MCF 10A (cell line): ENCODE measurements at regions of chr14 and their contacts with region 1.

Region 1: DNA sequence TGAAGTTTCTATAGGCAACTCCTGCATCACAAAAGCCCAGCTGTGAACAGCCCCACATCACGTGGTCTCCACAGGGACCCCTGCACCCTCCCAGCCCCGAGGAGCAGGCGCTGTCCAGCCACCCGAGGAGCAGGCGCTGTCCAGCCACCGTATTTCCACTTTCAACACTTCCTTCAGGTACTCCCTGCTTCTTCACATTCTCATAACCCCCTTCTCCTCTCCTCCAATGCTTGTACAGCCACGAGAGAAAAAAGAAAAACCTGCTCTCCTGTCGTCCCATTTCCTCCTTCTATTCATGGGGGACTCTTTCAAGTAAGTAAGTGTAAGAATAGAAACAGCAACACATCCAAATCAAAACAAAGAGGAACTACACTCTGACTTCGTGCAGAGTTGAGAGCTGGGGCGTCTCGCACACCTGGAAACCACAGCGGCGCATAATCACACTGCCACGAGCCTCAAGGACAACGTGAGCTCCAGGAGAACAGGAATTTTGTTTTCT is 11.9 kb downstream of the CDC42BPB start:
- DNase-seq: no peak
- H3K4me3 Mint-ChIP-seq: no peak overlapping the region
- H3K27ac Mint-ChIP-seq: no peak overlapping the region
- H3K4me1 Mint-ChIP-seq: peaks cover 15% of the 10 kb centered on the region
- H3K27me3 Mint-ChIP-seq: no peaks in the 10 kb centered on the region
- CTCF ChIP-seq: no peak

Region 2: GRCh38 chr14:103057365-103058096 is 12.1 kb after region 1 on chr14 and contains the start of gene CDC42BPB:
- CTCF ChIA-PET with region 1: no interaction called
- POLR2A ChIA-PET with region 1: interaction called, 15 read pairs
- intact Hi-C with region 1: no loop called
- DNase-seq: peak; percentile 90
- H3K4me3 Mint-ChIP-seq: peak within 1 kb of the TSS; percentile 81
- H3K27ac Mint-ChIP-seq: peak within 1 kb of the TSS; percentile 82
- H3K4me1 Mint-ChIP-seq: peaks cover 18% of the 10 kb centered on the region
- H3K27me3 Mint-ChIP-seq: no peaks in the 10 kb centered on the region
- CTCF ChIP-seq: no peak
- total RNA-seq, gene CDC42BPB: 82.7 and 91.1 TPM in 2 replicates